ENCODE measurements at regions of chr1 and their contacts with region 1.

Region 1: GRCh38 chr1:115089420-115090185 is at the start of gene TSPAN2:
- DNase-seq: peak; percentile 43 to 63 (median 57)
- ATAC-seq: peak; percentile 90
- H3K4me3 ChIP-seq: peak within 1 kb of the TSS; percentile 76
- H3K4me3 Mint-ChIP-seq: peak within 1 kb of the TSS; percentile 74 to 88 (median 84)
- H3K27ac ChIP-seq: peak within 1 kb of the TSS; percentile 69
- H3K27ac Mint-ChIP-seq: peak within 1 kb of the TSS; percentile 7 to 93 (median 71)
- H3K4me1 ChIP-seq: peaks cover 6 to 9% of the 10 kb centered on the region in 2 donors
- H3K4me1 Mint-ChIP-seq: peaks cover 10 to 54% (median 29%) of the 10 kb centered on the region in 7 donors
- H3K27me3 ChIP-seq: no peaks in the 10 kb centered on the region
- H3K27me3 Mint-ChIP-seq: peaks cover 0 to 29% (median 0%) of the 10 kb centered on the region in 5 donors
- total RNA-seq, gene TSPAN2: 0.30 to 12.0 (median 2.9) TPM in 4 of 5 experiments, not detected in the other

Region 2: GRCh38 chr1:115105831-115106230 is 16.2 kb after region 1 on chr1:
- CTCF ChIA-PET with region 1: no interaction called
- POLR2A ChIA-PET with region 1: no interaction called
- intact Hi-C with region 1: loop called in 1 of 2 experiments (anchors 2 kb)
- DNase-seq: no peak
- ATAC-seq: no peak
- H3K4me3 ChIP-seq: no peak overlapping the region
- H3K4me3 Mint-ChIP-seq: no peak overlapping the region
- H3K27ac ChIP-seq: no peak overlapping the region
- H3K27ac Mint-ChIP-seq: peak overlapping the region in 3 of 9 donors; percentile 2 to 57 (median 15)
- H3K4me1 ChIP-seq: no peaks in the 10 kb centered on the region
- H3K4me1 Mint-ChIP-seq: peaks cover under 1 to 21% (median 15%) of the 10 kb centered on the region in 7 donors
- H3K27me3 ChIP-seq: no peaks in the 10 kb centered on the region
- H3K27me3 Mint-ChIP-seq: peaks cover 0 to 3% (median 0%) of the 10 kb centered on the region in 5 donors